ENCODE measurements at regions of chr22 and their contacts with region 1.

Region 1: DNA sequence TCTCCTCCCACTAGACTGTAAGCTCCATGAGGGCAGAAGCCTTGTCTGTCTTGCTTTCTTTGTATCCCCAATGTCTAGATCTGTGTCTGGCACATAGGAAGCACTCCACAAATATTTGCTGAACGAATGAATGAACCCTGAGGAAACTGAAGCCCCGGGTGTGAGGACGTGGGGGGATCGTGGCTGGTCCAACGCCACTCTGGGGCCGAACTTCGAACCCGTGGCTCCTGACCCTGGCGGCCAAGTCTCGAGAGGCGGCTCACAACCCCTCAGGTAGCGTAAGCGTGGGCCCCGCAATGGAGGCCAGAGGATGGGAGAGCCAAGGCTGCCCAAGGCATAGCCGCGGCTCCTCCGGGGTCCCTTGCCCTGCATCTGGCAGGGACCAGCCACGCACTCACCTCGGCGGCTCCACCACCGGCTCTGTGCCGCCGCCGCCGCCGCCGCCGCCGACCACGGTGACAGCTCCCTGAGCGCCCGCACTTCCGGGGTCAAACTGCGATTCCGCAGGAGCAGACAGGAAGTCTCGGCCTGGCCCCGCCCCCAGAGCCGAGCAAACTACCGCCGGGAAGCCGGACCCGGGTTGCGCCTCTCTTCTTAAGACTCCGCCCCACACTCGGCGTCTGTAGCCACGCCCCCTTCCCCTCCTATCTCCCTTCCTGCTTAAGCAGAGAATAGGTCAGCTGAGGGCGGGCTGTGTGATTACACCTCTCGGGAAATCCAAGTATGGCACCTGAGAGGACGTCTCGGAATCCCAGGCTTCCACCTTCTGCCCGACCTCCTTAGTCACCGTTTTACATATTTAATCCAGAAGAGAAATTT is at the start of gene ASCC2:
- DNase-seq: peak; percentile 100
- total RNA-seq, gene ASCC2: 31.3 to 37.2 TPM

Region 2: DNA sequence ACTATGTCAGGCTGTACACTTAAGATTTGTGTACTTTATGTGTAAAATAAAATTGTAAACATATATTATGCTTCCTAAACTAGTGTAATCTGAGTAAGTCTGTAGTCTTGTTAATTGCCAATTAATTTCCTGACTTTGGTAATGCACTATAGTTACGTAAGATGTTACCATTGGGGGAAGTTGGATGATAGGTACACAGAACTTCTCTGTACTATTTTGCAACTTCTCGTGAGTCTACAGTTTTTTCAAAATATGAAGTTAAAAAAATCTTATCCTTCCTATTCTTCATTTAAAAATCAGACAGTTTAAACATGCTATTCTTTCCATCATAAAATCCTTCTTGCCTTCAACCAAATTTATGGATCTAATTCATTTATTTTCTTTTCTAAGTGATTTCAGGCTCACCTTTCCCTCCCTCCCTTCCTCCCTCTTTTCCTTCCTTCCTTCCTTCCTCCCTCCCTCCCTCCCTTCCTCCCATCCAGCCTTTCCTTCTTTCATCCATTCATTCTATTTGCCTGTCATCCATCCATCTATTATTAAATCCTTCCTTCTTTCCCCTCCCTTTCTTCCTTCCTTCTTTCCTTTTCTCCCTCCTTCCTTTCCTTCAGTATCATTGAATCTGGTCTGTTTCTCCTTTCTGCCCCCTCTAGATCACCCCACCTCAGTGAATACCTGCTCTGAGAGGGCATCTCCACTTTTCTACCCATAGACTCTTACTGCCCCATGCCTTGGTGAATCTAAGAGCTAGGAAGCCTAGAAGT is 22.2 kb after region 1 on chr22:
- intact Hi-C with region 1: no loop called
- DNase-seq: no peak

Region 3: DNA sequence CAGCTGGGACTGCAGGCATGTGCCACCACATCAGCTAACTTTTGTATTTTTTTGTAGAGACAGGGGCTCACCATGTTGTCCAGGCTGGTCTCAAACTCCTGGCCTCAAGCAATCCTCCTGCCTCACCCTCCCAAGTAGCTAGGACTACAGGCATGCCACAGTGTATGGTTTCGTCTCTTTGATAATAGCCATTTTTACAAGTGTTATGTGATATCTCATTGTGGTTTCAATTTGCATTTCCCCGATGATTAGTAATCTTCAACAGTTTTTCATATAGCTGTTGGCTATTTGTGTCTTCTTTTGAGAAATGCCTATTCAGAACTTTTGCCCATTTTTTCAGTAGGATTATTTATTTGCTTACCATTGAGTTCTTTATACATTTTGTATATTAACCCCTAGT is 36.0 kb after region 1 on chr22:
- intact Hi-C with region 1: loop called in 1 of 2 experiments (anchors 2 kb)
- DNase-seq: no peak

Region 4: DNA sequence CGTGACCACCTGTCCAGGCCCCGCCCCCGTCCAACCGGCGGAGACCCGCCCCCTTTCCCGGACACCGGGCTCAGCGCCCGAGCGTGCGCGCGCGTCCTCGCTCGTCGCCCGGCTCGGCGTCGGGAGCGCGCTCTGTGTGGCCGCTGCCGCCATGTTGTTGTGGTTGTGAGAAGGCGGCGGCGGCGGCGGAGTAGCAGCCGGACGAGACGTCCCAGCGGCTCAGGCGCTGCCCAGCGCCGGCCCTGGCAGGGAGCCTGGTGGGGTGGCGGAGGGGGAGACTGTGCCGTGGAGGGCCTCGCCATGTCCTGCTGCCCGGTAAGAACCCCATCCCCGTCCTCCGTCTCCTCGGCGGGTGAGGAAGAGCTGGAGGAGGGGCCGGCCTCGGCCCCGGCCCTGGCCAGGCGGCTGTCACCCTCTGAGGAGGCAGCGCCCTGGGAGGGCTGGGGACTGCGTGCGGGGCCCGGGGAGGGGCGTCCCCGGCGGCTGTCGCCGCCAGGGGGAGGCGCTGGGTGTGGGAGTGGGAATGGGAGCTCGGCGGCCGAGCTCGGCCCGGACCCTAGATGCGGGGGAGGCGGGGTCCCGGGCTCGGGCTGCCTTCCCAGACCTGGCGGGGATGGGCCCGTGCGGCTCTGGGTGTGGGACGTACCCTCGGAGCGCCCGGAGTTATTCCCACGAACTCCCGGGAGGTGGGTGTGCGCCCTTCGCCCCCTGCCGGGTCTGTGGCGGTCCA is 45.2 kb after region 1 on chr22 and contains the start of gene MTMR3:
- intact Hi-C with region 1: loop called in 1 of 2 experiments (anchors 1 kb)
- DNase-seq: peak; percentile 98
- total RNA-seq, gene MTMR3: 35.8 to 37.6 TPM